ENCODE measurements at regions of chr18 and their contacts with region 1.

Region 1: DNA sequence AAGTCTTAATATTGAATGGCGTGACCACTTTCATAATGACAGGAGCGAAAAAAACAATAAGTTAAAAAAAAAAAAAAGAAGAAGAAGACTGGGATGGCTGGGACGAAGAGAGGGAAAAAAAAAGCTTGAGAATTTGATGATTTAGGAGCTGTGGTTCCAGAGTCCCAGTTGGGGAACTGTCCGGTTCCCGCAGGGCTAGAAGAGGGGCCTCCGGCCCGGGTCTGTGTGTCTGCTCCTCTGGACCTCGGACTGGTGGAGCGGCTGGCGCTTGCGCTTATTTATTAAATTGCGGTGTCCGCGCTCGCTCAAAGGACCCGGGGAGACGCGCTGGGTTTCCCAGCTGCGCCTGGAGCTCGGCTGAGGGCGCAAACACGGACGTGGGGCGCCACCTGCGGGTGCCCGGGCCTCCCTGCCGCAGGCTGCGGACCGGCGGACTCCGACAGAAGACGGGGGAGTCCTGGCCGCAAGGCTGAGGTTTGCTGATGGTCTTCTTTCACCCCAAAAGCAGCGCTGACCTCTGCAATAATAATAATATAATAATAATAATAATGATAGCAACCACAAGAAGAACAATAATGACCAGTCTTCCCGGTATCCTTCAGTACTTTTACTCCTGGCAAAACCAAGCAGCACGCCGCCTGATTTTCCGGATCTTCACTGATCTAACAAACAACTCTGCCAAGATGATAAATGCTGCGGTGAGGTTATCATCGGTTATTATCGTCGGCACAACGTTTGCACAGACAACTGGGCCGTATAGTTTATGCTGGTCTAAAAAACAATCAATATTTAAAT is at the start of gene CBLN2:
- DNase-seq: peak; percentile 66
- H3K4me3 Mint-ChIP-seq: peak within 1 kb of the TSS; percentile 71
- H3K27ac Mint-ChIP-seq: no peak within 1 kb of the TSS
- H3K4me1 Mint-ChIP-seq: no peaks in the 10 kb centered on the region
- H3K27me3 Mint-ChIP-seq: peaks cover 71% of the 10 kb centered on the region
- CTCF ChIP-seq: peak; percentile 90
- total RNA-seq, gene CBLN2: not detected in 2 replicates

Region 2: DNA sequence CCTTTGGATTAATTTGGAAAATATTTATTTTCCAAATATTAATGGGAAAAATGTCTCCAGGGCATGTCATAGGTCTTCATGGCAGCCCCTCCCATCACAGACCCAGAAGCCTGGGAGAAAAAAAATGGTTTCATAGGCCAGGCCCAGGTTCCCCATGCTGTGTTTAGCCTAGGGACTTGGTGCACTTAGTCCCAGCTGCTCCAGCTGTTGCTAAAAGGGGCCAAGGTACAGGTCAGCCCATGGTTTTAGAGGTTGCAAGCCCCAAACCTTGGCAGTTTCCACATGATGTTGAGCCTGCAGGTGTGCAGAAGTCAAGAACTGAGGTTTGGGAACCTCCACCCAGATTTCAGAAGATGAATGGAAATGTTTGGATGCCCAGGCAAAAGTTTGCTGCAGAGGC is 1945.9 kb before region 1 on chr18:
- CTCF ChIA-PET with region 1: no interaction called
- POLR2A ChIA-PET with region 1: no interaction called
- intact Hi-C with region 1: loop called (anchors 2 kb)
- DNase-seq: no peak
- H3K4me3 Mint-ChIP-seq: no peak overlapping the region
- H3K27ac Mint-ChIP-seq: no peak overlapping the region
- H3K4me1 Mint-ChIP-seq: no peaks in the 10 kb centered on the region
- H3K27me3 Mint-ChIP-seq: peaks cover 23% of the 10 kb centered on the region
- CTCF ChIP-seq: no peak

Region 3: DNA sequence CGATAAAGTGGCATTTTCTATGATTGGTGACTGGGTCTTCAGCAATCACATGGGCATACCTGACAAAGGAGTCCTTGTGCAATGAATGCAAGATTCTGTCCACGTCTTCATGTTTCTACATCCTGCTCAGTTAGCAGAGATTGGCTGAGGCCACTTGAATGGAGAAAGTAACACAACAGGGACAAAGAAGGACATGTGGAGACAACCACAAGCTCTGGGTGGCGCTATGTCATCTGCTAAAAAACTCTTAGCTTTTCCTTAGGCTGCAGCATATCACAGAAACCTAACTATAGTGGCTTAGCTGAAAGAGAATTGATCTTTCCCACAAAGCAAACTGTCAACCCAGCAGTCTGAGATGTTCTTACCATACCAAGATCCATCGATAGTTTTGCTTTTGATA is 1145.8 kb before region 1 on chr18:
- CTCF ChIA-PET with region 1: no interaction called
- POLR2A ChIA-PET with region 1: no interaction called
- intact Hi-C with region 1: loop called (anchors 5 kb)
- DNase-seq: peak; percentile 45
- H3K4me3 Mint-ChIP-seq: no peak overlapping the region
- H3K27ac Mint-ChIP-seq: no peak overlapping the region
- H3K4me1 Mint-ChIP-seq: no peaks in the 10 kb centered on the region
- H3K27me3 Mint-ChIP-seq: no peaks in the 10 kb centered on the region
- CTCF ChIP-seq: peak; percentile 41

Region 4: GRCh38 chr18:72412927-72413326 is 131.4 kb before region 1 on chr18:
- CTCF ChIA-PET with region 1: no interaction called
- POLR2A ChIA-PET with region 1: no interaction called
- intact Hi-C with region 1: no loop called
- DNase-seq: no peak
- H3K4me3 Mint-ChIP-seq: no peak overlapping the region
- H3K27ac Mint-ChIP-seq: no peak overlapping the region
- H3K4me1 Mint-ChIP-seq: no peaks in the 10 kb centered on the region
- H3K27me3 Mint-ChIP-seq: no peaks in the 10 kb centered on the region
- CTCF ChIP-seq: no peak

Region 5: DNA sequence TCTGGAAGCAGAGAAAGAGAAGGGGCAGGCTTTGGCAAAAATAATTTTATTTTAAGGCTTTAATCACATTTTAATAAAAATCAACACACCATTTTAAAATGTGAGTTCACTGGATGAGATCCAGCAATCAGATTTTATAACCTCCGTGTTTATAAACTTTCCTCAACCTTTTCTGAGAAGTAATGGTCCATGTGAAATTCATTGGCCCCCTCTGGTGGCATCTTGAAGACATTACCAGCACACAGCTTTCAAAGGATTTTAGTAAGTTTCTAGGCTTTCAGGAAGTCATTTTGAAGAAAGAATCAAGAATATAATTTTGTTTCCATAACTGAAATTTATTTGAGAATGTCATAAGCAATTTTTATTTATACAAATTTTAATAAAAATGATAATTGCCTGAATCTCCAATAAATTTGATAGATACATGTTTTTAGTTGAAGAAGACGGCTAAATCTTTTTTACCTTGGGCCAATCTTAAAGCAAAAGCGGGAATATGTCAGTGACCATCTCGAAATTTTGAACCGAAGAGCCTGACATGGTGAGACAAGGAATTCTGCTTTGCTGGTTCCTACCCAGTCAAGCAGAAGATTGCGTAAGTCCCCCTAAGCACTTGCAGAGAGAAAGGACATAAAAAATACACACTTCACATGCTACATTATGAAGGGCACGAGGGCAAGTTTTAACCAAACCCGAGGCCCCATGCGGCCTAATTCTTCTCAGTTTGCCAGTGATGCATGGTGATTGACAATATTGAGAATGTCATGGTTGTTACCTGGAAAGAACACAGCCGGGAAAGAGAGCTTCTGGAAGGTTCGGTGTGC is 128.3 kb after region 1 on chr18:
- CTCF ChIA-PET with region 1: interaction called, 4 read pairs
- POLR2A ChIA-PET with region 1: no interaction called
- intact Hi-C with region 1: loop called (anchors 2 kb)
- DNase-seq: peak; percentile 56
- H3K4me3 Mint-ChIP-seq: no peak overlapping the region
- H3K27ac Mint-ChIP-seq: no peak overlapping the region
- H3K4me1 Mint-ChIP-seq: no peaks in the 10 kb centered on the region
- H3K27me3 Mint-ChIP-seq: no peaks in the 10 kb centered on the region
- CTCF ChIP-seq: peak; percentile 65

Measured in MCF 10A (cell line).